Naive thymus-derived CD4-positive, alpha-beta T cell (primary cell): ENCODE measurements at regions of chr19 and their contacts with region 1.

Region 1: DNA sequence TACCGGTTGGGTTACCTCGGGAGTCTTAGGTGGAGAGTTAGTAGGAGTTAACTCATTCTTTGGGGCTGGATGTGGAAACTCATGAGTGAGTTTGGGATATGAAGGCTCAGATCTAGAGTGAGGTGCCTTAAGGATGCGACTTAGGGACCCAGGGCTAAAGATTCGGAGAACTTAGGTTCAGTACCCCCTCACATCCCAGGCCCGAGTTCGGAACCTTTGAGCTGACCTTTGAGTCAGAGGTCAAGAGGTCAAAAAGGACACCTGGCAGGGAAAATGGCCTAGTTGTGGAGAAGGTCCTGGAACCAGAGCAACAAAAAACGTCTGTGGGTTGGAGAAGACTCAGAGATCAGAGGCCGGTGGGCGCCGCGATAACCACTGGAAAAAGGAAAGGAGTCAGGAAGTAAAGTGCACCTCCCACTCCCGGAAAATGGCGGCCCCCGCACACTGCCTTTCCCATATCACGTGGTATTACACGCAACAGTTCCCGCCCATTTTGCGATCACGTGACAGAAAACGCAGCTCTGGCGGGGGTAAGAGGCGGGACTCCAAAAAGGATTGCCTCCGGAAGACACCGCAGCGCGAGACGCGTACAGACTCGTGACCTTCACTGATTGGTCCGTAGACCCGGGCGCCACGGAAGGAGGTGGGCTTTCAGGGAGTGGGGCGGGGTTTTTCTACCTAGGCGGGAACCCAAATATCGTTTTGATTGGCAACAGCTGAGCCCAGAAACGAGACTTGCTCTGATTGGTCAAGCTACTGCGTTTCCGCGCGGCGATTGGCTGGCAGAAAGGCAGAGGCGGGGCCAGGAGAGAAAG is at the start of gene ACTMAP:
- DNase-seq: peak; percentile 95 to 100 (median 100)
- ATAC-seq: peak; percentile 93
- H3K4me3 ChIP-seq: peak within 1 kb of the TSS; percentile 96
- H3K4me3 Mint-ChIP-seq: peak within 1 kb of the TSS; percentile 93 to 100 (median 96)
- H3K27ac ChIP-seq: peak within 1 kb of the TSS; percentile 84
- H3K27ac Mint-ChIP-seq: peak within 1 kb of the TSS; percentile 90 to 99 (median 98)
- H3K4me1 ChIP-seq: peaks cover 11 to 27% of the 10 kb centered on the region in 2 donors
- H3K4me1 Mint-ChIP-seq: peaks cover 31 to 43% (median 42%) of the 10 kb centered on the region in 7 donors
- H3K27me3 ChIP-seq: no peaks in the 10 kb centered on the region
- H3K27me3 Mint-ChIP-seq: no peaks in the 10 kb centered on the region
- total RNA-seq, gene ACTMAP: 5.5 to 13.7 (median 7.8) TPM

Region 2: GRCh38 chr19:40425450-40426287 is 324.6 kb before region 1 on chr19 and contains the start of gene SERTAD1:
- CTCF ChIA-PET with region 1: no interaction called
- POLR2A ChIA-PET with region 1: no interaction called
- intact Hi-C with region 1: loop called in 1 of 2 experiments (anchors 2 kb)
- DNase-seq: peak; percentile 99 to 100 (median 100)
- ATAC-seq: peak; percentile 96
- H3K4me3 ChIP-seq: peak within 1 kb of the TSS; percentile 77
- H3K4me3 Mint-ChIP-seq: peak within 1 kb of the TSS; percentile 90 to 99 (median 96)
- H3K27ac ChIP-seq: peak within 1 kb of the TSS; percentile 87
- H3K27ac Mint-ChIP-seq: peak within 1 kb of the TSS; percentile 92 to 100 (median 98)
- H3K4me1 ChIP-seq: peaks cover 15 to 18% of the 10 kb centered on the region in 2 donors
- H3K4me1 Mint-ChIP-seq: peaks cover 12 to 38% (median 24%) of the 10 kb centered on the region in 7 donors
- H3K27me3 ChIP-seq: no peaks in the 10 kb centered on the region
- H3K27me3 Mint-ChIP-seq: peaks cover 0 to 2% (median 0%) of the 10 kb centered on the region in 5 donors
- total RNA-seq, gene SERTAD1: 8.1 to 30.9 (median 13.5) TPM

Region 3: GRCh38 chr19:40690693-40691420 is 59.4 kb before region 1 on chr19:
- CTCF ChIA-PET with region 1: no interaction called
- POLR2A ChIA-PET with region 1: no interaction called
- intact Hi-C with region 1: loop called (anchors 1 kb)
- DNase-seq: peak; percentile 60 to 90 (median 75)
- ATAC-seq: peak; percentile 92
- H3K4me3 ChIP-seq: peak overlapping the region; percentile 68
- H3K4me3 Mint-ChIP-seq: peak overlapping the region in 9 of 10 donors; percentile 78 to 96 (median 91)
- H3K27ac ChIP-seq: peak overlapping the region; percentile 55
- H3K27ac Mint-ChIP-seq: peak overlapping the region in 8 of 9 donors; percentile 58 to 94 (median 74)
- H3K4me1 ChIP-seq: peaks cover 0 to 6% of the 10 kb centered on the region in 2 donors
- H3K4me1 Mint-ChIP-seq: peaks cover 0 to 6% (median 4%) of the 10 kb centered on the region in 7 donors
- H3K27me3 ChIP-seq: no peaks in the 10 kb centered on the region
- H3K27me3 Mint-ChIP-seq: no peaks in the 10 kb centered on the region

Region 4: DNA sequence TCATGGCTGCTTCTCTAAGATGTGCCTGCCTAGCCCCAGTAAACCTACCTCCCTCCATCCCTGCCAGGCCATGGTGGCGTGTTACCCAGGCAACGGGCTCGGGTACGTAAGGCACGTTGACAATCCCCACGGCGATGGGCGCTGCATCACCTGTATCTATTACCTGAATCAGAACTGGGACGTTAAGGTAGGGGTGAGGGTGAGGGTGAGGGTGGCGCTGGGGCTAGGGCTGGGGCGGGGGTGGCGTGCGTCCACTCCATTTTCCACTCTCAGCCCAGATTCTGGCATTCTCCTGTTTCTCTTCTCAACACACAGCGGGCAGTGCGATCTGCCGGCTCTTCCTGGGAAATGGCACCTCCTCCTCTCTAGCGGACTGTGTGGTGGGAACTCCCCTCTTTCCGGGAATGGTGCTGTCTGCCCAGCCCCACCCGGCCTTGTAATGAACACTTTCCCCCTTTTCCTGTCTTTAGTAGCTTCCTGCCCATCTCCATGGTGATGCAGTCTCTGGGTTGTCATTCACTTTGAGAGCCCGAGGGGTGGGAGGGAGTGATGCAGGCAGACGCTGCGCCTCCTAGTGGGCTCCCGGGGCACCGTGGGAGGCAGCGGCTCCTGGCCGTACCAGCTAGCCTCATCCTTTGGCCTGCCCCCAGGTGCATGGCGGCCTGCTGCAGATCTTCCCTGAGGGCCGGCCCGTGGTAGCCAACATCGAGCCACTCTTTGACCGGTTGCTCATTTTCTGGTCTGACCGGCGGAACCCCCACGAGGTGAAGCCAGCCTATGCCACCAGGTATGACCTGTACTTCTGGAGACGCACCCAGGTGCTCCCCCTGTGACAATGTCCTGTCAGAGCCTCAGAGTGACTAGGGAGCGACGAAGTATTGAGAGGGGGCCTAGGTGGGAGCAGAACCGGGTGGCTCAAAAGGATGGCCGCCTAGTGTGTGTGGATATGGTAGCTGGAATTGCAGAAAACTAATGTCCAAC is 56.5 kb after region 1 on chr19:
- CTCF ChIA-PET with region 1: interaction called, 9 read pairs
- POLR2A ChIA-PET with region 1: interaction called, 19 read pairs
- intact Hi-C with region 1: loop called (anchors 1 kb)
- DNase-seq: peak; percentile 65 to 88 (median 81)
- ATAC-seq: peak; percentile 71
- H3K4me3 ChIP-seq: peak overlapping the region; percentile 53
- H3K4me3 Mint-ChIP-seq: peak overlapping the region; percentile 81 to 100 (median 90)
- H3K27ac ChIP-seq: peak overlapping the region; percentile 87
- H3K27ac Mint-ChIP-seq: peak overlapping the region; percentile 95 to 99 (median 98)
- H3K4me1 ChIP-seq: peaks cover 66 to 80% of the 10 kb centered on the region in 2 donors
- H3K4me1 Mint-ChIP-seq: peaks cover 67 to 98% (median 85%) of the 10 kb centered on the region in 7 donors
- H3K27me3 ChIP-seq: no peaks in the 10 kb centered on the region
- H3K27me3 Mint-ChIP-seq: peaks cover 0 to 6% (median 0%) of the 10 kb centered on the region in 5 donors

Region 5: DNA sequence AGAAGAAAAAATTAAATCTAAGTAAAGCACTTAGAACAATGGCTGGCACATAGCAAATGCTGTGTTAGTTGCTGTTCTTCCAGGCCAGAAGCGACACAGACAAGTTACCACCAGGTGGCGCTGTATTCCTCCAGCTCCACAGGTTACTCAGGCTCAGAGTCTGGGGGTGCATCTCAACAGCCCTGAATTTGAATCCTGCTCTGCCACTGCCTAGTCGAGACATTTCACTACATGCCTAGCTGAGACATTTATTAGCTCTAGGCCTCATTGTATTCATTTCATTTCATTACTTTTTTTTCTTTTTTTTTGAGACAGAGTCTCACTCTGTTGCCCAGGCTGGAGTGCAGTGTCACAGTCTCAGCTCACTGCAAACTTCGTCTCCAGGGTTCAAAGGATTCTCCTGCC is 224.4 kb after region 1 on chr19:
- CTCF ChIA-PET with region 1: no interaction called
- POLR2A ChIA-PET with region 1: interaction called, 4 read pairs
- intact Hi-C with region 1: loop called in 1 of 2 experiments (anchors 1 kb)
- DNase-seq: peak; percentile 54 to 84 (median 76)
- ATAC-seq: peak; percentile 87
- H3K4me3 ChIP-seq: no peak overlapping the region
- H3K4me3 Mint-ChIP-seq: peak overlapping the region in 1 of 10 donors; percentile 45
- H3K27ac ChIP-seq: no peak overlapping the region
- H3K27ac Mint-ChIP-seq: peak overlapping the region in 3 of 9 donors; percentile 53 to 74 (median 63)
- H3K4me1 ChIP-seq: peaks cover 16 to 19% of the 10 kb centered on the region in 2 donors
- H3K4me1 Mint-ChIP-seq: peaks cover 13 to 53% (median 27%) of the 10 kb centered on the region in 7 donors
- H3K27me3 ChIP-seq: no peaks in the 10 kb centered on the region
- H3K27me3 Mint-ChIP-seq: peaks cover 2 to 38% (median 3%) of the 10 kb centered on the region in 5 donors